ENCODE measurements at regions of chr7 and their contacts with region 1.

Region 1: GRCh38 chr7:148884299-148885022 is 370 bp upstream of the EZH2 start:
- DNase-seq: peak; percentile 88 to 92
- ATAC-seq: peak; percentile 91 to 93
- H3K4me3 ChIP-seq: peak overlapping the region; percentile 74 to 92 (median 85)
- H3K27ac ChIP-seq: peak overlapping the region; percentile 87 to 96 (median 92)
- H3K4me1 ChIP-seq: peaks cover 7 to 8% of the 10 kb centered on the region in 2 donors
- H3K27me3 ChIP-seq: peaks cover 0 to 3% (median 0%) of the 10 kb centered on the region in 3 donors
- CTCF ChIP-seq: no peak
- POLR2A ChIP-seq: peak; percentile 91 to 92

Region 2: DNA sequence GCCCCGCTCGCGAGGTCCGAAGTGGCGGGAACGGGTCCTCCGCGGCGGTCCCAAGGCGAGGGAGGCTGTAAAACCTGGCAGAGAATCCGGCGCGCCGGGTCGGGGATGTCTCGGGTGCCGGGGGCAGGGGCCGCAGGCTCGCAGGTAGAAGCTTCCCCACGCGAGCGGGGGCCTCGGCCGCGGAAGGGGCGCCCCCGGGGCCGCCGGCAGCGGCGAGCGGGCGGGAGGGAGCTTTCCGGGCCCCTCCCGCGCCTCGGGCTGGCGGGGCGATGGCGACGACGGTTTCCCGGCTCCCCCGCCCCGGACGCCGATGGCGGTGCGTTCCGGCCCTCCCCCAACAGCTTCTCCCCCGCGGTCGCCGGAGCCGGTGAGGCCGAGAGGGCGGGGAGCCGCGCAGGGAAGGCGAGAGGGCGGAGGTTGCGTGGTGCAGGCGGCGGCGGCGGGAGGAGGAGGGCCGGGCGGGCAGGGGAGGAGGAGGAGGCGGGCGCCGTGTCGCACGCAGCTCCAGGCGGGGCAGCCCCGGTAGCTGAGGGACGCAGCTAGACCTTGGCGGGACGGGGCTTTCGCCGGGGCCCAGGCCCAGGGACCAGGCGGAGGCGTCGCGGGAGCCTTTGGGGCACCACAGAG is 186.0 kb before region 1 on chr7 and contains the start of gene CUL1:
- in situ Hi-C with region 1: no loop called
- intact Hi-C with region 1: loop called (anchors 5 kb)
- DNase-seq: peak; percentile 75 to 82
- ATAC-seq: peak; percentile 74 to 82
- H3K4me3 ChIP-seq: peak within 1 kb of the TSS; percentile 56 to 81 (median 72)
- H3K27ac ChIP-seq: peak within 1 kb of the TSS; percentile 85 to 96 (median 92)
- H3K4me1 ChIP-seq: peaks cover 34 to 35% of the 10 kb centered on the region in 2 donors
- H3K27me3 ChIP-seq: no peaks in the 10 kb centered on the region
- CTCF ChIP-seq: no peak
- POLR2A ChIP-seq: peak; percentile 68 to 72
- total RNA-seq, gene CUL1: 78.7 to 101 (median 84.6) TPM

Region 3: GRCh38 chr7:148809856-148810255 is 74.6 kb before region 1 on chr7:
- in situ Hi-C with region 1: no loop called
- intact Hi-C with region 1: no loop called
- DNase-seq: no peak
- ATAC-seq: no peak
- H3K4me3 ChIP-seq: no peak overlapping the region
- H3K27ac ChIP-seq: no peak overlapping the region
- H3K4me1 ChIP-seq: no peaks in the 10 kb centered on the region
- H3K27me3 ChIP-seq: no peaks in the 10 kb centered on the region
- CTCF ChIP-seq: no peak
- POLR2A ChIP-seq: no peak

Region 4: DNA sequence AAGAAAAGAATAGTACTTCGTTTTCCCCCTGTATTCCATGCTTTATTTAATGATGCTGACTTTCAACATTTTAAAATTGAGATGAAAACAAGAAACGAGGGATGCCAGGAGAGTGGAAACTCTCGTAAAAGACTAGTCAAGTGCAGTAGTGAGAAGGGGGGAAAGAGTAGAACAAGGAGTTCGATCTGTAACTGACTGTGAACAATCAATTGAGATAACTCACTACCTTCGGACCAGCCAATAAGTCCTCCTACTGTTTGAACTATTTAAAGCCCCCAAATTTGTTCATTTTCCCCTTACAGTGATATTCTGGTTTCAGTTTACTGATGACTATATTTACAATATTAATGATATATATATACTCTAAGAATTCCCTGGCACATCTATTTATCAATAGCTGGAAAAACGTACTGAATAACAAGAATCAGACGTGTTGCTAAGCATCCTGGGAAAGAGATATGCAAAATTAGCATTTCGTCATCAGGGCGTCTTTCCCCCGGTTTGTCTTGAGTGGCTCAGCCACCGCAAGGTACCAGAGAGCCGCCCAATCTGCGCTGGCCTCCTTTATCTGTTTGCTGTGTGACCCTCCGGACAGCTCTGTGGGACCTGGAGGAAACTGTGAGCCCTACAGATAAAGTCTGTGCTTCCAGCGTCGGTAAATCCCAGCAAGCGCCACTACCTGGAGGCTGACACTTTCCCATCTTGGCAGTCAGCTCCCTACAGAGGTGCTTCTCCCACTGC is 102.7 kb after region 1 on chr7:
- in situ Hi-C with region 1: no loop called
- intact Hi-C with region 1: loop called (anchors 1 kb)
- DNase-seq: peak; percentile 73 to 76
- ATAC-seq: peak; percentile 92 to 94
- H3K4me3 ChIP-seq: peak overlapping the region; percentile 68 to 85 (median 70)
- H3K27ac ChIP-seq: peak overlapping the region; percentile 70 to 82 (median 76)
- H3K4me1 ChIP-seq: peaks cover 24 to 37% of the 10 kb centered on the region in 2 donors
- H3K27me3 ChIP-seq: no peaks in the 10 kb centered on the region
- CTCF ChIP-seq: no peak
- POLR2A ChIP-seq: no peak

Region 5: DNA sequence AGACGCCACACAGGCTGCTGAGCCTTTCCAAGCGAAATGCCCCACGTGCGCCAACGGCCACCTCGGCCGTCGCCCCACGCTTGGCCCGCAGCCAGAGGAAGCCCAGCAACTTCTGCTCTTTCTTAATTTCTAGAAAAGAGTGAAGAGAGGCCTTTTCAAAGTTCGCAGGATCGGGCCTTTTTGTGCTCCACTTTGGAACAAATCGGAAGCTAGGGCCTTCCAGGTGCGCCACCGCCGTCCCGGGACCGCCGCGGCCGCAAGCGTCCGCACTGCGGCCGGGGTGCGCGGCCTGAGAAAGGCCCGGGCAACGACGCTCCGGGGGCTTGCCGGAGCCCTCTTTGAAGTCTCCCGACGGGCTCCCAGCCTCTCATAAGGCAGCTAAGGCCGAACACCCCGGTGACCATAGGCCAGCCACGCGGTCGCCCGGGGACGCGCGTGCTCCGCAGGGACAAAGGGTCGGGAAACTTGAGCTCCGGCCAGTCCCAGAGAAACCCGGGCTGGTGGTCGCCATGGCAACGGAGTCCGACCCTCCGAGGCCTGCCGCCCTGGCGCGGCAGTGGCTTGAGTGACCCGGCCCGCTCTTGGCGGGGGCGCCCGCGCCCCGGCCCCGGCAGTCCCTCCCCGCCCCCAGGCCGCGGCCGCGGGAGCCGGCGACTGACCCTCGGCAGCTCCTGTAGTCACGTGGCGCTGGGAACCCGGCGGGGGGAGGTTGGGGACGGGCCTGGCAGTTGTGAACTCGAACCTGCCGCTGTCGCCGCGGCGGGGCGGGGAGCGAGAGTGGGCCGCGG is 1483.8 kb after region 1 on chr7 and contains the start of gene REPIN1:
- in situ Hi-C with region 1: no loop called
- intact Hi-C with region 1: loop called (anchors 10 kb)
- DNase-seq: peak; percentile 90 to 94
- ATAC-seq: peak; percentile 75 to 85
- H3K4me3 ChIP-seq: peak within 1 kb of the TSS; percentile 74 to 87 (median 84)
- H3K27ac ChIP-seq: peak within 1 kb of the TSS; percentile 98 to 100 (median 100)
- H3K4me1 ChIP-seq: peaks cover 33 to 40% of the 10 kb centered on the region in 2 donors
- H3K27me3 ChIP-seq: no peaks in the 10 kb centered on the region
- CTCF ChIP-seq: peak in 1 of 5 experiments; percentile 22
- POLR2A ChIP-seq: peak; percentile 89 to 91
- total RNA-seq, gene REPIN1: 115 to 332 (median 159) TPM

Measured in gastrocnemius medialis (tissue), 4 donors.